AG04450 (cell line): ENCODE measurements at regions of chr1 and their contacts with region 1.

Region 1: DNA sequence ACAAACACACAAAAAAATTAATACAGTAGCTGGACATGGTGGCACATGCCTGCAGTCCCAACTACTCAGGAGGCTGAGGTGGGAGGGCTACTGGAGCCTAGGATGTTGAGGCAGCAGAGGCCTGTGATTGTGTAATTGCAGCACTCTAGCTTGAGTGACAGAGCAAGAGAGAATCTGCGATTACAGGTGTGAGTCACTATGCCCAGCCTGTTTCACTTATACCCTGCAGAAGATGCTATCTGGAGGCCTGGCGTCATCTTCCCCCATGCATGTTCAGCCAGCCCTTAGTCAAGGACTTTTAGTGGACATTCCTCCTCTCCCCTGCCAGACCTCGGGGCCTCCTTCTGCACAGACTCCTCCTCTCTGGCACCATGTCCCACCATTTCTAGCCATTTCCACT is 36.3 kb upstream of the RCC2 start:
- DNase-seq: peak; percentile 27
- H3K4me3 ChIP-seq: no peak overlapping the region
- H3K27ac ChIP-seq: no peak overlapping the region
- H3K27me3 ChIP-seq: peaks cover 2% of the 10 kb centered on the region
- CTCF ChIP-seq: no peak

Region 2: DNA sequence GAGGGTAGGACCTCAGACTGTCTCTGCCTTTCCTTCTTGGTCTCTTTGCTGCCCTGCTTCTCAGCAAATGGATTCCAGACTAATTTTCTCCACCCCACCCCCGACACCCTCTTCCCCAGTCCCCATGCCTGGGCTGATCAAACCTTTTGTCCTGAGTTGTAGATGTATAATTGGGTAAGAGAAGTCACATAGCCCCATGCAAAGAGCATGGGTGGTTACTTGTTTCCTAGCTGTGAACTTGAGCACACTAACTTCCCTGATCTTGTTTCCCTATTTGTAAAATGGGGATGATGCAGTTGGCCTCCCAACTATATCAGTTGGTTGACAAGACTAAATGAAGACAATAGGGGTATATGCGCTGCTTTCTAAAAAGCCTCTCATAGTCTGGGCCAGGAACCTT is 94.6 kb before region 1 on chr1:
- CTCF ChIA-PET with region 1: no interaction called
- POLR2A ChIA-PET with region 1: no interaction called
- DNase-seq: no peak
- H3K4me3 ChIP-seq: no peak overlapping the region
- H3K27ac ChIP-seq: no peak overlapping the region
- H3K27me3 ChIP-seq: peaks cover 51% of the 10 kb centered on the region
- CTCF ChIP-seq: no peak

Region 3: GRCh38 chr1:17451731-17452130 is 24.0 kb before region 1 on chr1:
- CTCF ChIA-PET with region 1: interaction called, 10 read pairs
- POLR2A ChIA-PET with region 1: no interaction called
- DNase-seq: no peak
- H3K4me3 ChIP-seq: no peak overlapping the region
- H3K27ac ChIP-seq: no peak overlapping the region
- H3K27me3 ChIP-seq: no peaks in the 10 kb centered on the region
- CTCF ChIP-seq: no peak

Region 4: DNA sequence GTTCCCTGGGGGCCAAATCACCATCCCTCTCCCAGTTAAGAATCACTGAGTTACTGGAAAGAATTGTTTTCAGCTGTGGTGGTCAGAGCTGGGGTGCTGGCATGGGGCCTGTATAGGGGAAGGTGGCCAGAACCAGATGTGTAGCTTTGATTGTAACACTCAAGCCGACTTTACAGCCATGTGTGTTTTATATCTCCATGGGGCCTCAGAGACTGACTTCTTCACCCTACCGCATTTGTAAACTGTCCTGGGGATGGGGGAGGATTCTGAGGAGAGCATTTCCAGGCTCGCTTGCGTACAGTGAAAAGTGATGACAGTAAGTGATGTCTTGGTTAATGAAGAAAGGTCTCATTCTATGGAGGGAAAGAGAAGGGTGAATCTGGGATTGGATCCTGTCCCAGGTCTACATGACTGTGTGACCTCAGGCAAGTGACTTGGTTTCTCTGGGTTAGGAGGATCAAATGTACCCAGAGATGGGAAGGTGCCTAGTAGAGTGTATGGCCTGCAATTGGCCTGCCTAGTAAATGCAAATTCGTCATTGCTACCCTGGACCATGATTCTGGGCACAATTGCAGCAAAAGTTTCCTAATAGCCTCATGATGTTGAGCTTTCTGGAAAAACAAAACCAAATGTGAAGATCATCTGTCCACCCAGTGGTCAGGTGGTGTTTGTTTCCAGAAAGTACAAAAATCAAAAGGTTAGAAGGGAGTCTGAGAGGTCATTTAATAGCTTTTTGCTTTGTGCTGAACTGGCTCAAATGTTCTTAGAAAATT is 13.5 kb after region 1 on chr1:
- CTCF ChIA-PET with region 1: interaction called, 11 read pairs
- POLR2A ChIA-PET with region 1: no interaction called
- DNase-seq: peak; percentile 23
- H3K4me3 ChIP-seq: no peak overlapping the region
- H3K27ac ChIP-seq: peak overlapping the region; percentile 31
- H3K27me3 ChIP-seq: peaks cover 2% of the 10 kb centered on the region
- CTCF ChIP-seq: no peak

Region 5: GRCh38 chr1:17648457-17649145 is 172.9 kb after region 1 on chr1:
- CTCF ChIA-PET with region 1: no interaction called
- POLR2A ChIA-PET with region 1: no interaction called
- DNase-seq: no peak
- H3K4me3 ChIP-seq: no peak overlapping the region
- H3K27ac ChIP-seq: no peak overlapping the region
- H3K27me3 ChIP-seq: no peaks in the 10 kb centered on the region
- CTCF ChIP-seq: no peak

Region 6: GRCh38 chr1:17673329-17674072 is 197.8 kb after region 1 on chr1:
- CTCF ChIA-PET with region 1: no interaction called
- POLR2A ChIA-PET with region 1: no interaction called
- DNase-seq: no peak
- H3K4me3 ChIP-seq: no peak overlapping the region
- H3K27ac ChIP-seq: no peak overlapping the region
- H3K27me3 ChIP-seq: no peaks in the 10 kb centered on the region
- CTCF ChIP-seq: no peak